ENCODE measurements at regions of chr7 and their contacts with region 1.

Region 1: DNA sequence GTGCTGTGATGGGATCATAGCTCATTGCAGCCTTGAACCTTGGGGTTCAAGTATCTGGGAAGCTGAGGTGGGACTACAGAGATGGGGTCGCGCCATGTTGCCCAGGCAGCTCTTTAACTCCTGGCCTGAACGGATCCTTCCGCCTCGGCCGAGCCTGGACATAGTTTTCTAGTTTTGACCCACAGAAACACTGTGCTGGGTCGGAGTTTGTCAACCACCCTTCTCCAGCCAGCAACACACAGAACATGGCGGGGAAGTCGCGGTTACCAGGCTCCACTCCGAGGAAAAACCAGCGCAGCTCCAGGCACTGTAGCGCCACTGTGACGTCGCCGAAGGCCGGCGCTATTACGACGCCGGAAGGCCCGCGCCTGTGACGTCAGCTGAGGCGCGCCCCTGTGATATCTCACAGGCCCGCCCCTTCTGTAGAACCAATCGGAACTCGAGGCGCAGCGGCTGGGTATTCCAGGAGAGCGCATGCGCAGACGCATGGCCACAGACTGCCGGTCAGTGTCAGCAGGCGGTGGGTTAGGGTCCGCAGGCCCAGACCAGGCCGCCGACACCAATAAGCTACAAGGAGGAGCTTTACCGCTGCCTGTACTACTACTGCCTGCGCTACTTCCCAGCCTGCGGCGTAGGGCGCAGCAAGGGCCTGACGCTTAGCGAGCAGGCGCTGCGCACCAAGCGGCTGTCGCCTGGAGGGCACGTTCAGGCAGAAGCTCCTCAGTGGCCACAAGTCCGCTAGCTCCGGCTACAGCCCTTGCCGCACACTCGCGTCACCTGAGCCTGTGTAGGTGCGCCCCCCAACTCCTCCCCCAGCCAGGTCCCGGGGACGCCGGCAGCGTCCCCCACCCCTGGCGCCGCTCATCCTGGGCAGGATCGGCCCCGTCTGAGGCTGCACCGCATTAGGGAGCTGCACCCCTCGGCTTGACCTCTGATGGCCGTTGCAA is 135.2 kb upstream of the KCTD7 start:
- DNase-seq: peak; percentile 94
- ATAC-seq: peak; percentile 91
- H3K4me3 Mint-ChIP-seq: peak overlapping the region; percentile 91
- H3K27ac Mint-ChIP-seq: peak overlapping the region; percentile 96
- H3K4me1 Mint-ChIP-seq: peaks cover 16% of the 10 kb centered on the region
- H3K27me3 Mint-ChIP-seq: no peaks in the 10 kb centered on the region
- CTCF ChIP-seq: no peak

Region 2: GRCh38 chr7:65750511-65751344 is 742.8 kb before region 1 on chr7:
- CTCF ChIA-PET with region 1: no interaction called
- POLR2A ChIA-PET with region 1: no interaction called
- intact Hi-C with region 1: loop called (anchors 10 kb)
- DNase-seq: peak; percentile 83
- ATAC-seq: peak; percentile 99
- H3K4me3 Mint-ChIP-seq: peak overlapping the region; percentile 96
- H3K27ac Mint-ChIP-seq: peak overlapping the region; percentile 94
- H3K4me1 Mint-ChIP-seq: peaks cover 15% of the 10 kb centered on the region
- H3K27me3 Mint-ChIP-seq: no peaks in the 10 kb centered on the region
- CTCF ChIP-seq: no peak

Region 3: DNA sequence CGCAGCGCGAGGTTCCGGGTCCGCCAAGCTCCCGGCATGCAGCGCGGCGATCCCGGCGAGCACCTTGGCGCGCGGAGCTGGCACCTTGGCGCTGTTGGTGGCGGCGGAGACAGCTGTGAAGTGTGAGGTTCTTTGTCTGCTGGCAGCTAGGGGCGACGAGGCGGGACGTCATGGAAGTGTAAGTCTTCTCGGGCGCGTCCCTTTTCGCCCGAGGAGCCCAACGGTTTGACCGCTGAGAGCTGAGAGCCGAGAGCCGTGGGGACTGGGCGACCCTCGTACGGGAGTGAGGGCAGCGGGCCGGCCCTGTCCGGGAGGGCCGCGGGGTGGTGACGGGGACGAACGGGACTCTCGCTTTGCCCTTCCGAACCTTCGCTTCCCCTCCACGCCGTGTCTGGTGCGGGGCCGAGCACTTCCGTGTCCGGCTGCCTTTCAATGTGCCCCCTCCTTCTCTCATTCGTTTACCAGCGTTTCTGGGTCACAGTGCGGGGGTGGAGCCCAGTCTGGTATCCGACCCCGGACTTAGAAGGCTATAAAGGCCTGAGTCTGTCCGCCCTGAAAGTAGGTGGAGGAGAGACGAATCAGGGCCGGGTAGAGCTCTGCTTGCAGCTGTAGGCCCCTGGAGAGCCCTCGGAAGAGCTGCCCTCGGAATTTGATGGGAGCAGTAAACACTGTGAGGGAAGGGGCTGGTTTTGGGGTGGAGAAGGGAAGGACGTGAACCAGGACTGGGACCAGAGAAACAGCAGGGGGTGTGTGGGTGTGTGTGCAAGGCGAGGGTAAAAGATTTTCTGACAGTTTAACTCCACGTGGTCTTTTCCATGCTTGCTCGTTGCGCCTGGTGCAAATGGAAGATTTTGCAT is 378.5 kb before region 1 on chr7 and contains the start of gene CRCP:
- CTCF ChIA-PET with region 1: no interaction called
- POLR2A ChIA-PET with region 1: interaction called, 6 read pairs
- intact Hi-C with region 1: loop called (anchors 2 kb)
- DNase-seq: peak; percentile 85
- ATAC-seq: peak; percentile 91
- H3K4me3 Mint-ChIP-seq: peak within 1 kb of the TSS; percentile 95
- H3K27ac Mint-ChIP-seq: peak within 1 kb of the TSS; percentile 95
- H3K4me1 Mint-ChIP-seq: peaks cover 44% of the 10 kb centered on the region
- H3K27me3 Mint-ChIP-seq: no peaks in the 10 kb centered on the region
- CTCF ChIP-seq: no peak
- total RNA-seq, gene CRCP: 40.8 and 42.5 TPM in 2 replicates

Region 4: GRCh38 chr7:66413379-66414114 is 80.0 kb before region 1 on chr7:
- CTCF ChIA-PET with region 1: no interaction called
- POLR2A ChIA-PET with region 1: interaction called, 8 read pairs
- intact Hi-C with region 1: loop called (anchors 1 kb)
- DNase-seq: peak; percentile 67
- ATAC-seq: peak; percentile 78
- H3K4me3 Mint-ChIP-seq: peak overlapping the region; percentile 80
- H3K27ac Mint-ChIP-seq: peak overlapping the region; percentile 41
- H3K4me1 Mint-ChIP-seq: peaks cover 13% of the 10 kb centered on the region
- H3K27me3 Mint-ChIP-seq: no peaks in the 10 kb centered on the region
- CTCF ChIP-seq: no peak

Region 5: GRCh38 chr7:66681491-66682349 is 188.2 kb after region 1 on chr7:
- CTCF ChIA-PET with region 1: no interaction called
- POLR2A ChIA-PET with region 1: no interaction called
- intact Hi-C with region 1: loop called (anchors 1 kb)
- DNase-seq: peak; percentile 95
- ATAC-seq: peak; percentile 93
- H3K4me3 Mint-ChIP-seq: peak overlapping the region; percentile 89
- H3K27ac Mint-ChIP-seq: peak overlapping the region; percentile 89
- H3K4me1 Mint-ChIP-seq: peaks cover 48% of the 10 kb centered on the region
- H3K27me3 Mint-ChIP-seq: no peaks in the 10 kb centered on the region
- CTCF ChIP-seq: no peak

Region 6: GRCh38 chr7:66790196-66790595 is 296.7 kb after region 1 on chr7:
- CTCF ChIA-PET with region 1: no interaction called
- POLR2A ChIA-PET with region 1: interaction called, 11 read pairs
- intact Hi-C with region 1: no loop called
- DNase-seq: no peak
- ATAC-seq: no peak
- H3K4me3 Mint-ChIP-seq: no peak overlapping the region
- H3K27ac Mint-ChIP-seq: no peak overlapping the region
- H3K4me1 Mint-ChIP-seq: no peaks in the 10 kb centered on the region
- H3K27me3 Mint-ChIP-seq: no peaks in the 10 kb centered on the region
- CTCF ChIP-seq: no peak

Region 7: GRCh38 chr7:66920769-66921395 is 427.4 kb after region 1 on chr7 and contains the start of gene TMEM248:
- CTCF ChIA-PET with region 1: no interaction called
- POLR2A ChIA-PET with region 1: interaction called, 4 read pairs
- intact Hi-C with region 1: loop called (anchors 1 kb)
- DNase-seq: peak; percentile 94
- ATAC-seq: peak; percentile 90
- H3K4me3 Mint-ChIP-seq: peak within 1 kb of the TSS; percentile 99
- H3K27ac Mint-ChIP-seq: peak within 1 kb of the TSS; percentile 92
- H3K4me1 Mint-ChIP-seq: peaks cover 34% of the 10 kb centered on the region
- H3K27me3 Mint-ChIP-seq: no peaks in the 10 kb centered on the region
- CTCF ChIP-seq: no peak
- total RNA-seq, gene TMEM248: 89.2 and 95.0 TPM in 2 replicates